Prostate gland (tissue), 2 donors: ENCODE measurements at regions of chr12 and their contacts with region 1.

Region 1: DNA sequence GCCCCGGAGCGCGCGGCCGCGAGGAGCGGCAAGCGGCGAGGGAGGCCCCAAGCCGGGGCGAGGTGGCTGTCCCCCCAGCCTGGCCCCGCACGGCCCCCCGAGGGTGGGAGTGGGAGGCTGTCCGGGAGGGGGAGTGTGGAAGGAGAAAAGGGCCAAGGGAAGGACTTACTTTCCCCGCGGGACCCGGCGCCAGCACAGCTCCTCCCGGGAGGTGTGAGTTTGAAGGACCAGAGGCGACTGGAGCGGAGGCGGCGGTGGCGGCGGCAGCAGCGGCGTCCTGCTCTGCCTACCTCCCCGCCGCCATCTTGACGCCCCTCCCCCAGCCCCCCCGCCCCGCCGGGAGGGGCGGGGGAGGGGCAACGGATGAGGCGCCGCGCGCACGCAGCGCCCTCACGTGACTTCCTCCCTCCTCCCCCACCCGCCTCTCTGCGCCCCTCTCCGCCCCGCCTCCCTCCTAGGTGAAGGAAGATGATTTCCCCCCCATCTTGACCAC is at the start of gene SBNO1:
- DNase-seq: peak; percentile 91
- H3K4me3 ChIP-seq: peak within 1 kb of the TSS; percentile 81 to 88
- H3K27ac ChIP-seq: peak within 1 kb of the TSS; percentile 94 to 97
- H3K4me1 ChIP-seq: peaks cover 7% of the 10 kb centered on the region
- H3K27me3 ChIP-seq: no peaks in the 10 kb centered on the region
- CTCF ChIP-seq: no peak
- POLR2A ChIP-seq: peak; percentile 87
- total RNA-seq, gene SBNO1: 22.6 to 53.3 TPM

Region 2: GRCh38 chr12:123232807-123233543 is 131.6 kb before region 1 on chr12 and contains the starts of genes MPHOSPH9 and MTRFR:
- intact Hi-C with region 1: no loop called
- DNase-seq: peak; percentile 99
- H3K4me3 ChIP-seq: peak within 1 kb of the TSS; percentile 55 to 73
- H3K27ac ChIP-seq: peak within 1 kb of the TSS; percentile 85 to 89
- H3K4me1 ChIP-seq: peaks cover 16% of the 10 kb centered on the region
- H3K27me3 ChIP-seq: no peaks in the 10 kb centered on the region
- CTCF ChIP-seq: peak in 2 of 4 experiments; percentile 3 to 25
- POLR2A ChIP-seq: peak; percentile 70
- total RNA-seq, gene MPHOSPH9: 24.3 to 25.0 TPM
- total RNA-seq, gene MTRFR: 18.3 to 26.7 TPM

Region 3: DNA sequence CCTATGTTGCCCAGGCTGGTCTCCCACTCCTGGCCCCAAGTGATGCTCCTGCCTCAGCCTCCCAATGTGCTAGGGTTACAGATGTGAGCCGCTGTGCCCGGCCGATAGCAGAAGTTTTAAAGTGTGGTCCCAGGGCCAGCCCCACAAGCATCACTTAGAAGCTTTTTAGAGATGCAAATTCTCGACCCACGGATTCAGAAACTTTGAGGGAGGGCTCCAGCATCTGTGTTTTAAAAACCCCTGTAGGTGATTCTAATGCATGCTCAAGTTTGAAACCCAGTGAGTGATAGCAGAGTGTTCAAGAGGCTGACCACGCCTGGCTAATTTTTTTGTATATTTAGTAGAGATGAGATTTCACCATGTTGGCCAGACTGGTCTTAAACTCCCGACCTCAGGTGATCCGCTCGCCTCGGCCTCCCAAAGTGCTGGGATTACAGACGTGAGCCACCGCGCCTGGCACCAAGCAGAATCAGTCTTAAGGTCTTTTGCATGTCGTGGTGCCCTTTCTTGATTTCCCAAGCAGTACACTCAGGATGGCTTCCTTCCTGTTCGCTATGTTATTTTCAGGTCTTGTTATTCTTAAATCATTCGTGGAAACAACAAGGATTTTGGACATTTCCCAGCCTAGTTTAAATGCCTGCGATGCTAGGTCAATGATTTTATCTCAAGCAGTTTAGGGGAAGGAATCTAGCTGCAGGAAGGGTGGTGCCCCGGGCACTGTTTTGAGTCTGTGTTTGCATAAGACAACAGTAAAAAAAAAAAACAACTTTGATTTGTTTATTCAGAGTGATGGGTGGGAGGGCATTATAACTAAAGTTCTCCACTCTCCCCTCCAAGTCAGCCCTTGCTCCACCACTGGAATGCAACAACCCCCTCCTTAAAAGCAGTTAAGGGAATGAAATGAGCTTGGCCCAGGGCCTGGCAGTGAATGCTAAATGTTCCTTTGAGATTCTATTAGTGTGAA is 81.1 kb after region 1 on chr12:
- intact Hi-C with region 1: loop called (anchors 5 kb)
- DNase-seq: peak; percentile 78
- H3K4me3 ChIP-seq: no peak overlapping the region
- H3K27ac ChIP-seq: peak overlapping the region; percentile 78
- H3K4me1 ChIP-seq: no peaks in the 10 kb centered on the region
- H3K27me3 ChIP-seq: no peaks in the 10 kb centered on the region
- CTCF ChIP-seq: no peak
- POLR2A ChIP-seq: no peak

Region 4: DNA sequence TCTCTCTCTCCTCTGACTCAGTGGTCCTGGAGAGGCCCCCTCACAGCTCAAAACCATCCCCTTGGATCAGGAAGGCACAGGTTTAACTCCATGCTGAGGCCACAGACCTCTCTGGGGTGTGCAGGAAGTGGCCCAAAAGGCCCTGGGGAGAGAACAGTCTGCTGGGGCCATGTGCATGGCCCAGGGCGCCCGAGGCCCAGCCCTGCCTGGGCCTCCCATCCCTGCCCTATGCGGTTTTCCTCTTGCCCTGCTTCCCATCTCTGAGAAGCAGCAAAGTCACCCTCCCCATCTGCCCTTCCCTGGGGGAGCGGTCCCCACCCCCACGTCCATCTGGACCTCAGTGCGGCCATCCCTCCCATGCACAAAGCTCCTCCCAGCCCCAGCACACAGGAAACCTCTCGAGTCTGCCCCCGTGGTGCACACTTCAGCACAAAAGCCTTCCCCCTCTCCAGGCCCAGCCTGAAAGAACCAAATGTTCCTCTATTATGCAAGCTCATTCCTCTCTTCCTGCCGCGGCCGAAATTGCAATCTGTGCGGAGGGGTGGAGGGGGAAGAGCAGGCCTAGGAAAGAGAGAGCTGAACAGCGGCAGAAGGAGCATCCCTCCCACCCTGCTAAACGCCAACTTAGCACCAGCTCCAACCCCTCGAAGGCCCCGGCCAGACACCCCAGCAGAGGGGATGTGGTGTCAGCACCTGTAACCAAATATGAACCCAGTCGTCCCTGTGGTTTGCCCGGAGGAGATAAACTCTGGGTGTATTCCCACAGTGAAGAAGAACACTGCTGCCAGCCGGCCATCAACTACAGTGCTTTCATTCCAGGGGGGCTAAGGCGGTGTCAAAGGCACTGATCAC is 1390.6 kb after region 1 on chr12:
- intact Hi-C with region 1: no loop called
- DNase-seq: peak; percentile 72
- H3K4me3 ChIP-seq: no peak overlapping the region
- H3K27ac ChIP-seq: peak overlapping the region; percentile 73 to 78
- H3K4me1 ChIP-seq: peaks cover 5% of the 10 kb centered on the region
- H3K27me3 ChIP-seq: no peaks in the 10 kb centered on the region
- CTCF ChIP-seq: peak in 1 of 4 experiments; percentile 8
- POLR2A ChIP-seq: no peak